ENCODE measurements at regions of chr13 and their contacts with region 1.

Region 1: GRCh38 chr13:100710176-100710575 is 35.6 kb upstream of the TMTC4 start:
- DNase-seq: no peak
- H3K4me3 ChIP-seq: no peak overlapping the region
- H3K27ac ChIP-seq: no peak overlapping the region
- H3K4me1 ChIP-seq: no peaks in the 10 kb centered on the region
- H3K27me3 ChIP-seq: no peaks in the 10 kb centered on the region
- CTCF ChIP-seq: no peak
- EP300 ChIP-seq: no peak
- POLR2A ChIP-seq: no peak

Region 2: DNA sequence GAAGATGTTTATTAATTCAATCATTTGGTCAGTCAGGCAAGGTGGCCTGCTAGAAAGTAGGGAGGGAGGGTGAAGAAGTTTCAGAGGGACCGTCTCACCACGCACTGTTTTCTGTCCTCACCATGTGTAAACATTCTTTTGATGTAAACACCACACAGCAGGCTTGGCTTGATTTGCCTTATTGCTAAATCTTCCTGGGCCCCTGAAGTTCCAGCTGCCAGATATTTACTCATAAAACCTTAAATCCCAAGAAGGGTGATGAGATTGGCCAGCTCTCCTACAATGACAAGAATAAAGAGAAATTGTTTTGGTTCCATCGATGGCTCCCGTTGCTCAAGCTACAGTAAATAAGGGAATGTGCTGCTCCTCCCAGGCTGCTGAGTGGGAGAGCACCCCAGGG is 162.6 kb after region 1 on chr13:
- in situ Hi-C with region 1: no loop called
- intact Hi-C with region 1: no loop called
- DNase-seq: no peak
- H3K4me3 ChIP-seq: no peak overlapping the region
- H3K27ac ChIP-seq: no peak overlapping the region
- H3K4me1 ChIP-seq: no peaks in the 10 kb centered on the region
- H3K27me3 ChIP-seq: no peaks in the 10 kb centered on the region
- CTCF ChIP-seq: no peak
- EP300 ChIP-seq: no peak
- POLR2A ChIP-seq: no peak

Region 3: GRCh38 chr13:101115762-101116171 is 405.6 kb after region 1 on chr13:
- in situ Hi-C with region 1: no loop called
- intact Hi-C with region 1: no loop called
- DNase-seq: no peak
- H3K4me3 ChIP-seq: no peak overlapping the region
- H3K27ac ChIP-seq: no peak overlapping the region
- H3K4me1 ChIP-seq: no peaks in the 10 kb centered on the region
- H3K27me3 ChIP-seq: peaks cover 3% of the 10 kb centered on the region
- CTCF ChIP-seq: no peak
- EP300 ChIP-seq: no peak
- POLR2A ChIP-seq: no peak

Region 4: DNA sequence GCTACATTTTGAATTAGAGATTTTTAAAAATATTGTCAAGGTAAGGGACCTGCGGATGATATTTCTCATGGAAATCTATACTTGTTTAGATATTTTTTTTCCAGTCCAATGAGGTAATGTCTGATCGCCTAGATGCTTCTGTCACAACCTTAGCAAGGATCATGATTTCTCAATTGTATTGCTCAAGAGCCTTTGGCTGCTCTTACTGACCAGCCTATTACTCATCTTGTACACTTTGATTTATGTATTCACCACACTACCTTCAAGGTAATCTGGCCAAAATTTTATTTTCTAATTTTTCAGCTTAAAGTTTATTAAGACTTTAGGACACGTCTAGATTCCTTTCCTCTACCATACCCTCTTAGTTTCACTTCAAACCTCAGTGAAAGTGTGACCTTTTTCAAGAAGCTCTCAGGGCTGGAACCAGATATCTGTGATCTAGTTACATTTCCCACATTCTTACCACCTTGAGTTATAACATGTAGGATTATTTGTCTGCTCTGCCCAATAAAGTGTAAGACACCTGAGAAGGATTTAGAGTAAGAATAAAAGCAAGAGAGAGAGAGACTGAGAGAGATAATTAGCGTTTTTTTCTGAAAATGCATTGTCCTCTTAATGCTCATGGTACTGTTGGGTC is 939.4 kb after region 1 on chr13:
- in situ Hi-C with region 1: no loop called
- intact Hi-C with region 1: loop called (anchors 5 kb)
- DNase-seq: no peak
- H3K4me3 ChIP-seq: no peak overlapping the region
- H3K27ac ChIP-seq: no peak overlapping the region
- H3K4me1 ChIP-seq: no peaks in the 10 kb centered on the region
- H3K27me3 ChIP-seq: no peaks in the 10 kb centered on the region
- CTCF ChIP-seq: no peak
- EP300 ChIP-seq: no peak
- POLR2A ChIP-seq: no peak